ENCODE measurements at regions of chr20 and their contacts with region 1.

Region 1: DNA sequence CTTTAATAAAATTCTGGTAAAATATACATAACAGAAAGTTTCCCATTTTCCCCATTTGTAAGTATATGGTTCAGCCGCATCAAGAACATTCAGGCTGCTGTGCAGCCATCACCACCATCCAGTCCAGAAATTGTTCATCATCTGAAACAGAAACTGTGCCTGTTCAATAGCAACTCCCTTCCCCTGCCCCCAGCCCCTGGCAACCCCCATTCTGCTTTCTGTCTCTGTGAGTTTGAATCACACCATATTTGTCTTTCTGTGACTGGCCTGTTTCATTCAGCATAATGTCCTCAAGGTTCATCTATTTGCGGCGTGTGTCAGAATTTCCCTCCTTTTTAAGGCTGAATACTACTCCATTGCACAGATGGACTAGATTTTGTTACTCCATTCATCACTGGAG is 19.1 kb downstream of the VSTM2L start:
- DNase-seq: no peak
- ATAC-seq: no peak
- H3K4me3 ChIP-seq: no peak overlapping the region
- H3K27ac ChIP-seq: no peak overlapping the region
- H3K4me1 ChIP-seq: no peaks in the 10 kb centered on the region
- H3K27me3 ChIP-seq: peaks cover 74% of the 10 kb centered on the region
- CTCF ChIP-seq: no peak
- POLR2A ChIP-seq: no peak
- RAD21 ChIP-seq: no peak

Region 2: GRCh38 chr20:38029453-38029852 is 107.4 kb after region 1 on chr20:
- CTCF ChIA-PET with region 1: no interaction called
- POLR2A ChIA-PET with region 1: interaction called, 19 read pairs
- dilution Hi-C with region 1: no loop called
- in situ Hi-C with region 1: no loop called
- intact Hi-C with region 1: no loop called
- DNase-seq: no peak
- ATAC-seq: no peak
- H3K4me3 ChIP-seq: no peak overlapping the region
- H3K27ac ChIP-seq: no peak overlapping the region
- H3K4me1 ChIP-seq: peaks cover 9% of the 10 kb centered on the region
- H3K27me3 ChIP-seq: no peaks in the 10 kb centered on the region
- CTCF ChIP-seq: no peak
- POLR2A ChIP-seq: no peak
- RAD21 ChIP-seq: no peak